ENCODE measurements at regions of chr16 and their contacts with region 1.

Region 1: DNA sequence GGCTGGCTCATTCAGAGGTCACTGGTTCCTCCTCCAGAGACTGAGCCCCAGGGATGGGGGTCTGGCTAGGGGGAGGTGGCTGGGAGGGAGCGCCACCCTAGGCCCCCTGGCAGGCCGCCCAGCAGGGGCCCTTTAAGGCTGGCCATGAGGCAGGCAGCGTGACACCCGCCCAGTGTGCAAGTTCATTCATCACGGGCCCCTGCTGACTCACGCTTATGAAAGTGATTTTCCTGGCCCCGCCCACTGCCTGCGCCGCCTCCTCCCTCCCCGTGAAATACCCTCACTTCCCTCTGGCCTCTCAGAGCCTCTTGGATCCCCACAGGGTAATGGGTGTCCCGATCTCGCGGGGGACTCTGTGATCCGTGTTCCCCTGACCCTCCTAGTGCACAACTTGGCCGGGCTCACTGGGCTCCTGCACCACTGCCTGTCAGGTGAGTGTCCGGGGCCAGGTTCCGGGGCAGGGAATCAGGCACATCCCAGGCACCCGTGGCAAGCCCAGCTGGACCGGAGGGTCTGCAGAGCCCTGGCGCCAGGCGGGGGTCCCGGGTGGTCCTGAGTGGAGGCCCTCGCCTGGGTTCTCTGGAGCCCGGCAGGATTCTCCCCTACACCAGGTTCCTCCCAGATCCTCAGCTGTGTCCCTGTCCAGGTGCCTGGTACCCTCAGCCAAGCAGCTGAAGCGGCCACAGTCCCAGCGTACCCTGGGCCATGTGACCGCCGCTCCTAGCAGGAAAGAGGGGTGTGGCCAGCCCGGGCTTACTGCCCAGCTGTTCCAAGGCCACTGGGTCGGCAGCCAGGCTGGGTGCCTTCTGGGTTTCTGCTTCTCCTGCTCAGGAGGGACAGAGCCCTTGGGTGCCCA is at the start of gene OSGIN1:
- DNase-seq: peak; percentile 96 to 99 (median 97)
- ATAC-seq: peak; percentile 94 to 95
- H3K4me3 ChIP-seq: peak within 1 kb of the TSS; percentile 61
- H3K27ac ChIP-seq: peak within 1 kb of the TSS; percentile 82
- H3K4me1 ChIP-seq: peaks cover 7% of the 10 kb centered on the region
- H3K27me3 ChIP-seq: no peaks in the 10 kb centered on the region
- total RNA-seq, gene OSGIN1: 2.4 to 6.8 (median 3.8) TPM

Region 2: DNA sequence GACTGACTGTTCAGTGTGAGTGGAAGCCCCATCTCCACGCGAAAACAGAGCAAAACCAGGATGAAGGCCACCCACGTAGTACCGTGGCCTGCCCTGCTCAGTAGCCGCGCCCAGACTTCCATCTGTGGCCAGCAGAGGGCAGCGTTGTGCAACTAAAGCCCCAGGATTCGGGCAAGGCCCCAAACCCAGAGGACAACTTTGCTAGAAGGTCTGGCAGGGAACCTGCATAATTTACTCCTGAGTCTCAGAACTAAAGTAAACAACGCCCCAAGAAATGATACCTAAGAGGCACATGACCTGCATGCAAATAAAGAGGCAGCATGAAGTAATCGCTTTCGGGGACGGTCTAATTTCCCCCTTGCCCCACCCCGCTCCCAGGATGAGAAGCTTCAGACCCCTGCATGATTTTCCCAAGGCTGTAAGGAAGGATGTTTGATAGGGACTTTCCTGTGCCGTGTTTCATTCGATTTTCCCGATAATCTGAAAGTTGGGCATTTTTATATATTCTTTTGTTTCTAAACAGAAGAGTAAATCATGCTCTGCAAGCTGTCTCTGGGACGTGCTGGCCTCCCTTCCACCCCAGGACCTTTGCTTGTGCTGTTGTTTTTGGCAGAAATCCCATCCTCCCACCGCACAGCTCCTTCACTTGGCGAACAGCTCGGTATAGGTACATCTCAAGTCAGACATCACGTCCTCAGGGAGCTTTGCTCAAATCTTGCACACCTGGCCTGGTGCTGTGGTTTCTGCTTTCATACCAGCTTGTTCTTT is 126.8 kb before region 1 on chr16:
- intact Hi-C with region 1: loop called in 1 of 4 experiments (anchors 10 kb)
- DNase-seq: peak; percentile 83 to 95 (median 93)
- ATAC-seq: peak; percentile 82 to 91
- H3K4me3 ChIP-seq: no peak overlapping the region
- H3K27ac ChIP-seq: no peak overlapping the region
- H3K4me1 ChIP-seq: no peaks in the 10 kb centered on the region
- H3K27me3 ChIP-seq: no peaks in the 10 kb centered on the region

Region 3: DNA sequence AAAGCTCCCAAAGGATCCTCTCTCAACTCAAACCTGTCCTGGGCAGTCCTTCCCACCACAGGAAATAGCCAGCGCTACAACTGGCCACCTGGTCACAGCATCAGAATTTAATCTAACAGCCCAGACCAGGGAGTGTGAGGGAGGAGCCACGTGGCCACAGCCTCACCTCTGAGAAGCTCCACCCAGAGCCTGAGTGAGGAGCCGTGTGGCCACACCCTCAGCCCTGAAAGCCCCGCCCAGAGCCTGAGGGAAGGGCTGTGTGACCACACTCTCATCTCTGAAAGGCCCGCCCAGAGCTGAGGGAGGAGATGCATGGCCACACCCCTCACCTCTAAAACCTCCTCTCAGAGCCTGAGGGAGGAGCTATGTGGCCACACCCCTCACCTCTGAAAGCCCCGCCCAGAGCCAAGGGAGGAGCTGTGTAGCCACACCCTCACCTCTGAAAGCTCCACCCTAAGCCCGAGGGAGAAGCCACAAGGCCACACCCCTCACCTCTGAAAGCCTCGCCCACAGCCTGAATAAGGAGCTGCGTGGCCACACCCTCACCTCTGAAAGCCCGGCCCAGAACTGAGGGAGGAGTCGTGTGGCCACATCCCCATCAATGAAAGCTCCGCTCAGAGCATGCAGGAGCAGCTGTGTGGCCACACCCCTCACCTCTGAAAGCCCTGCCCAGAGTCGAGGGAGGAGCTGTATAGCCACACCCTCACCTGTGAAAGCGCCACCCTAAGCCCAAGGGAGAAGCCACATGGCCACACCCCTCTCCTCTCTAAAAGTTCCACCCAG is 60.8 kb after region 1 on chr16:
- intact Hi-C with region 1: no loop called
- DNase-seq: peak in 2 of 3 donors; percentile 37 to 64
- ATAC-seq: peak; percentile 69 to 80
- H3K4me3 ChIP-seq: no peak overlapping the region
- H3K27ac ChIP-seq: no peak overlapping the region
- H3K4me1 ChIP-seq: no peaks in the 10 kb centered on the region
- H3K27me3 ChIP-seq: no peaks in the 10 kb centered on the region

Region 4: GRCh38 chr16:84062734-84063640 is 109.8 kb after region 1 on chr16:
- intact Hi-C with region 1: loop called in 1 of 4 experiments (anchors 5 kb)
- DNase-seq: peak; percentile 85 to 92 (median 92)
- ATAC-seq: peak; percentile 91 to 93
- H3K4me3 ChIP-seq: no peak overlapping the region
- H3K27ac ChIP-seq: peak overlapping the region; percentile 28
- H3K4me1 ChIP-seq: peaks cover 2% of the 10 kb centered on the region
- H3K27me3 ChIP-seq: no peaks in the 10 kb centered on the region

Region 5: GRCh38 chr16:84175350-84176081 is 222.3 kb after region 1 on chr16:
- intact Hi-C with region 1: loop called in 1 of 4 experiments (anchors 10 kb)
- DNase-seq: peak; percentile 58 to 75 (median 70)
- ATAC-seq: peak; percentile 59 to 71
- H3K4me3 ChIP-seq: no peak overlapping the region
- H3K27ac ChIP-seq: peak overlapping the region; percentile 55
- H3K4me1 ChIP-seq: peaks cover 7% of the 10 kb centered on the region
- H3K27me3 ChIP-seq: no peaks in the 10 kb centered on the region

Region 6: DNA sequence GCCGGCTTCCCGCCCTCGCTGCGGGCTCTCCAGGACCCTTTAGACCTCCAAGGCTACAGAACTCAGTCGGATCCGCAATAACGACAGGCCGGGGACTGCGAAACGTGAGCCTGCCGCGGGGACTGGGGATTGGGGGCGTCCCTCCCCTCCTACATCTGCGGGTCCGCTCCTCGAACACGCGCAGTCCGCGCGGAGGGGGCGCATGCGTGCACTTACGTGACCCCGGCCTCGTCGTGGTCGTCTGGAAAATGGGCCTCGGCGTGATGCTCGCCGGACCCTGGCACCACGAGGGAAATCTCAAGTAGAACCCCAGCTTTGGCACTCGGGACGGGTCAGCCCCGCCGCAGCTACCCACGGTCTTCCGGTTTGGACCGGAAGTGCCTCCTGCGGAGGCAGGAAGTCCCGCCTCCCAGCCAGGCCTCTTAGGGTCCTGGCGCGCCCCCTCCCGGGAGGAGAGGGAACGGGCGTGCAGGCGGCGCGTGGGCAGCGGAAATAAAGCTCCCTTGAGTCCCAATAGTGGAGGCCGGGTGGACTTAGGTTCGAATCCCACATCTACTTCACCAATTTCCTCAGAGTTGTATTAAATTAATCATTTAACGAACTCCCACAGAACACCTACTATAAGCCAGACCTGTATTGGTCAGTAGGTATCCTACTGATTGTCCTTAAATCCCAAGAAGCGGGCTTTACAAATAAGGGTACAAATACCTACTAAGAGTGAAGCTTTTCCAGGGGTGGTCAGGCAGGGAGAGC is 233.7 kb after region 1 on chr16 and contains the start of gene TAF1C:
- intact Hi-C with region 1: loop called in 1 of 4 experiments (anchors 5 kb)
- DNase-seq: peak; percentile 94 to 98 (median 97)
- ATAC-seq: peak; percentile 93 to 96
- H3K4me3 ChIP-seq: peak within 1 kb of the TSS; percentile 68
- H3K27ac ChIP-seq: peak within 1 kb of the TSS; percentile 82
- H3K4me1 ChIP-seq: peaks cover 2% of the 10 kb centered on the region
- H3K27me3 ChIP-seq: no peaks in the 10 kb centered on the region
- total RNA-seq, gene TAF1C: 26.0 to 31.1 (median 28.4) TPM

Region 7: DNA sequence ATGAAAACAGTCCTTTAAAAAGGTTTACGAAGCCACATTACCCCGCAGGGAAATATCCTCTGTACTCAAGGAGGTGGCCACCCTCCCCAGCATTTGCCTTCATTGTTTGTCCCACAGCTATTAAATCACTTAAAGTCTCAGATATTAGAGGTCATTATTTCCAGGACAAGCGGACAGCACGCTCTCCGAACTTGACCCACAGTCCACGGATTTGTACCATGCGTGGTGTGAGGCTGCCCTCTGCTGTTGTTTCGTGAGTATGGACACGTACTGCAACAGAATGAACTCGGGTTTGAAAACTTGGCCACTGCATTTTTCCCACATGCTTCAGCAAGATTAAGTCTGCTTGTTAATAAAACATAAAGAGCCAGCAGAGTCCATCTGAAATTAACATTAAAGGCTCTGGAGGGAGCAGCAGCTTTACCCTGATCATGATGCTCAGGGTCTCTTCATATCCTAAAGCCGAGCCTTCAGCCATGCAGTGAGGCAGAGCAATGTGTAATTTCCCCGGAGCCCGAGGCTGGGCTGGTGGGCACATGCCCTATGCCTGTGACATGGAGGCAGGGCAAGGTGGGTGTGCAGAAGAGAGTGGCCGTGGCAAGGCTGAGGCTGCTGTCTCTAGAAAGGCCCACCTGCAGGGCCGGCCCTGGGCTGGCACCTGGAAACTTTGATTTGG is 531.5 kb after region 1 on chr16:
- intact Hi-C with region 1: loop called in 1 of 4 experiments (anchors 5 kb)
- DNase-seq: peak; percentile 57 to 85 (median 83)
- ATAC-seq: peak; percentile 73 to 85
- H3K4me3 ChIP-seq: no peak overlapping the region
- H3K27ac ChIP-seq: no peak overlapping the region
- H3K4me1 ChIP-seq: no peaks in the 10 kb centered on the region
- H3K27me3 ChIP-seq: no peaks in the 10 kb centered on the region

Measured in right cardiac atrium (tissue), 5 donors.